ENCODE measurements at regions of chr1 and their contacts with region 1.

Region 1: GRCh38 chr1:211680752-211681327 is 5.4 kb upstream of the NEK2 start:
- DNase-seq: peak; percentile 72
- H3K4me3 ChIP-seq: no peak overlapping the region
- H3K27ac ChIP-seq: no peak overlapping the region
- H3K4me1 ChIP-seq: peaks cover 7% of the 10 kb centered on the region
- H3K27me3 ChIP-seq: no peaks in the 10 kb centered on the region
- CTCF ChIP-seq: peak; percentile 73

Region 2: GRCh38 chr1:211830330-211831142 is 149.7 kb after region 1 on chr1 and contains the start of gene LPGAT1:
- CTCF ChIA-PET with region 1: no interaction called
- dilution Hi-C with region 1: no loop called
- in situ Hi-C with region 1: no loop called
- intact Hi-C with region 1: loop called (anchors 1 kb)
- DNase-seq: peak; percentile 53
- H3K4me3 ChIP-seq: peak within 1 kb of the TSS; percentile 69 to 84 (median 75)
- H3K27ac ChIP-seq: peak within 1 kb of the TSS; percentile 44
- H3K4me1 ChIP-seq: peaks cover 15% of the 10 kb centered on the region
- H3K27me3 ChIP-seq: no peaks in the 10 kb centered on the region
- CTCF ChIP-seq: peak; percentile 19 to 59
- total RNA-seq, gene LPGAT1: 42.0 to 44.5 TPM

Region 3: DNA sequence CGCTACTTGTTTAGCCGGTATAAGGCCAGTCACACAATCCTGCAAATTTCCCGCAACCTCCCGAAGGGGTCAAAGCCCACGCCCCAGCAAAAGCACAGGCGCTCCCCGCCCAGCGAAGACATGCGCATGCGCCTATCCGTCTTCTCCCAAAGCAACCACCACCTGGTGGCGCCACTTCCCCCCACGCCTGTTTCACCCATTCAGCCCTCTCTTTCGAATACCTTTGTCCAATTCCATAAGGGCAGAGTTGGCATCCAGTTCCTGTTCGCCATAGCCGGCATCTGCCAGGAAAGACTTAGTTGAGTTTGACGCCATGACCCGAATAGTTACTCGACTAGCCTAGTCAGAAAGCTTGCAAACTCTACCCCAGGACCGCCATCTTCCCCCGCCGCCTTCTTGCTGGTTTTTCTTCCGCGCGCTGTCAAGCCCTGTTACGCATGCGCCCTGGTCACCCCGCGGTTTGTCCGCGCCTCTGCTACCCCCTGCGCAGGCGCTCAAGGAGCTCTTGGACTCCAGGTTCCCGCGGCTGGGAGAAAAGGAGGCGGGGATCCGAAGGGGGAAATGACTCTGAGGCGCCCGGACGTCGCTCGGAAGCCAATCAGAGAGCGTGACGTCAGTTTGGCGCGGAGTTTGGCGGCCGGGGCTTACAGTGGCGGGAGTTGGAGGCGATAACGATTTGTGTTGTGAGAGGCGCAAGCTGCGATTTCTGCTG is 354.4 kb after region 1 on chr1 and contains the starts of genes DTL and INTS7:
- CTCF ChIA-PET with region 1: interaction called, 29 read pairs
- dilution Hi-C with region 1: no loop called
- in situ Hi-C with region 1: loop called in 1 of 2 experiments (anchors 25 kb)
- intact Hi-C with region 1: loop called (anchors 1 kb)
- DNase-seq: peak; percentile 99
- H3K4me3 ChIP-seq: peak within 1 kb of the TSS; percentile 89 to 98 (median 95)
- H3K27ac ChIP-seq: peak within 1 kb of the TSS; percentile 86
- H3K4me1 ChIP-seq: peaks cover 30% of the 10 kb centered on the region
- H3K27me3 ChIP-seq: no peaks in the 10 kb centered on the region
- CTCF ChIP-seq: peak; percentile 77 to 84
- total RNA-seq, gene DTL: 3.2 to 24.6 TPM
- total RNA-seq, gene INTS7: 16.8 to 24.3 TPM

Region 4: GRCh38 chr1:212055333-212055732 is 374.5 kb after region 1 on chr1:
- CTCF ChIA-PET with region 1: no interaction called
- dilution Hi-C with region 1: no loop called
- in situ Hi-C with region 1: no loop called
- intact Hi-C with region 1: no loop called
- DNase-seq: no peak
- H3K4me3 ChIP-seq: no peak overlapping the region
- H3K27ac ChIP-seq: no peak overlapping the region
- H3K4me1 ChIP-seq: no peaks in the 10 kb centered on the region
- H3K27me3 ChIP-seq: no peaks in the 10 kb centered on the region
- CTCF ChIP-seq: no peak

Region 5: DNA sequence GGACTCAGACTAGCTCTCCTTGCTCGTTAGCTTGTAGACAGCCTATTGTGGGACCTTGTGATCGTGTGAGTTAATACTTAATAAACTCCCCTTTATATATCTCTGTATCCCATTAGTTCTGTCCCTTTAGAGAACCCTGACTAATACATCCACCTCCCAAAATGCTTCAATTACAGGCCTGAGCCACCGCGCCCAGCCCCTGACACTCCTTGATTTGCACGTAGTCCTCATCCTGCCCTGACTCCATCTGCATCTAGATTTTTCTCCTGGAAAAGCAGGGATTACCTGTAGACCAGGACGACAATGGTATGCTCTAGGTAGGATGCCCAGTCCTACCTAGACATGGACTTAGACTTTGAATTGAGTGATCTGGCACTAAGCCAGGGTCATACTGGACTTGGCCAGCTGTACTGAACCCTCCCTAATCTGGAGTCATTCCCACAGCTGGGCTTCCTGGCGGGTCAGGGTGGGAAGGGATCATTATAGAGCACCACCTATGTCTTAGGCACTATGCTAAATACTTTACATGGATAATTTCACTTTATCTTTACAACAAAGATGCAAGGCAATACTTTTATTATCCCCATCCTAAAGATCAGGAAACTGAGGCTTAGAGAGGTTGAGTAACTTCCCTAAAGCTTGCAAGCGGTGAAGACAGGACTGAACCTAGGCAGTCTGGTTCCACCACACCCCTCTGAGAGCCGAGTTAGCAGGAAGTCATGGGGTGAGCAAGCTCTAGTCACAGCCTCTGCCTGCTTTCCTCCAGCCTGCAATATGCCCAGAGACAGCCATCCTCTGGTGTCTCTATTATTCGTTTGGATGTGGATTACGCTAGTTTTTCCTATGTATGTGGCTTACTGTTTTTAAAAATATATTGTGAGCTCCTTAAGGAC is 444.1 kb after region 1 on chr1:
- CTCF ChIA-PET with region 1: no interaction called
- dilution Hi-C with region 1: no loop called
- in situ Hi-C with region 1: no loop called
- intact Hi-C with region 1: no loop called
- DNase-seq: peak; percentile 23
- H3K4me3 ChIP-seq: no peak overlapping the region
- H3K27ac ChIP-seq: no peak overlapping the region
- H3K4me1 ChIP-seq: no peaks in the 10 kb centered on the region
- H3K27me3 ChIP-seq: no peaks in the 10 kb centered on the region
- CTCF ChIP-seq: no peak

Region 6: DNA sequence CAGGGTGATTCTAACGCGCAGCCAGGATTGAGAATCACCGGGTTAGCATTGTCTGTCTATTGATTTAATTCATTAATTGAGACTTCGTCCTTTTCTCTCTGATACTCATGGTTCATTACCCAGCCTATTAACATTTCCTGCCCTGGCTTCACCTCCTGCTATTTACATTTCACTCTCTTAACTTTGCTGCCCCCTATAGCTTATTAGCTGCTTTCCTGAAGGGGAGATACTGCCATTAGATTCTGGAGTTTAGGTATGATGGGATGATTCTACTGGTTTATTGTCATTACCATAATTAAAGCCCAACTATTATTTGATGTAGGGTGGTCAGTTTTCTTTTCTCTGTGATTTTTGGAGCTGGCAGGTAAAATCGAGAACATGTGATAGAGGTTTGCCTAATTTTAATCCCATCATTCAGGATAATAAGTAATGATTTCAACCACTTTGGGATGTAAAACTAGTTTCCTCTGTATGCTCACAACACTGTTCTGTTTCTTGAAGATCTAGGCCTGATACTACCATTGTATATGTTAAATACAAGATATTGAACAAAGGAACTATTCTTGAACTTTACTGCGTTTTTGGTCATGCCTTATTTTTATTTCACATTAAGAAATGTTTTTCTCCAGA is 610.8 kb after region 1 on chr1:
- CTCF ChIA-PET with region 1: interaction called, 3 read pairs
- dilution Hi-C with region 1: no loop called
- in situ Hi-C with region 1: no loop called
- intact Hi-C with region 1: loop called (anchors 2 kb)
- DNase-seq: peak; percentile 50
- H3K4me3 ChIP-seq: no peak overlapping the region
- H3K27ac ChIP-seq: no peak overlapping the region
- H3K4me1 ChIP-seq: peaks cover 35% of the 10 kb centered on the region
- H3K27me3 ChIP-seq: no peaks in the 10 kb centered on the region
- CTCF ChIP-seq: peak; percentile 68 to 81

Region 7: GRCh38 chr1:212432706-212433576 is 752.1 kb after region 1 on chr1 and contains the start of gene NENF:
- CTCF ChIA-PET with region 1: no interaction called
- dilution Hi-C with region 1: no loop called
- in situ Hi-C with region 1: loop called in 1 of 2 experiments (anchors 25 kb)
- intact Hi-C with region 1: no loop called
- DNase-seq: peak; percentile 82
- H3K4me3 ChIP-seq: peak within 1 kb of the TSS; percentile 48 to 68 (median 56)
- H3K27ac ChIP-seq: peak within 1 kb of the TSS; percentile 71
- H3K4me1 ChIP-seq: peaks cover 9% of the 10 kb centered on the region
- H3K27me3 ChIP-seq: no peaks in the 10 kb centered on the region
- CTCF ChIP-seq: no peak
- total RNA-seq, gene NENF: 35.5 to 46.2 TPM